Esophagus muscularis mucosa (tissue), 4 donors: ENCODE measurements at regions of chr11 and their contacts with region 1.

Region 1: GRCh38 chr11:123233280-123233974 is 38.4 kb upstream of the CLMP start:
- DNase-seq: no peak
- H3K4me3 ChIP-seq: no peak overlapping the region
- H3K27ac ChIP-seq: peak overlapping the region; percentile 56 to 74 (median 68)
- H3K4me1 ChIP-seq: peaks cover 0 to 56% (median 53%) of the 10 kb centered on the region in 4 donors
- H3K27me3 ChIP-seq: no peaks in the 10 kb centered on the region
- CTCF ChIP-seq: no peak
- EP300 ChIP-seq: no peak
- POLR2A ChIP-seq: no peak

Region 2: GRCh38 chr11:123069908-123070821 is 163.3 kb before region 1 on chr11:
- intact Hi-C with region 1: no loop called
- DNase-seq: no peak
- H3K4me3 ChIP-seq: peak overlapping the region; percentile 5 to 30 (median 15)
- H3K27ac ChIP-seq: peak overlapping the region; percentile 30 to 68 (median 55)
- H3K4me1 ChIP-seq: peaks cover 4 to 59% (median 40%) of the 10 kb centered on the region in 4 donors
- H3K27me3 ChIP-seq: no peaks in the 10 kb centered on the region
- CTCF ChIP-seq: no peak
- EP300 ChIP-seq: no peak
- POLR2A ChIP-seq: no peak

Region 3: DNA sequence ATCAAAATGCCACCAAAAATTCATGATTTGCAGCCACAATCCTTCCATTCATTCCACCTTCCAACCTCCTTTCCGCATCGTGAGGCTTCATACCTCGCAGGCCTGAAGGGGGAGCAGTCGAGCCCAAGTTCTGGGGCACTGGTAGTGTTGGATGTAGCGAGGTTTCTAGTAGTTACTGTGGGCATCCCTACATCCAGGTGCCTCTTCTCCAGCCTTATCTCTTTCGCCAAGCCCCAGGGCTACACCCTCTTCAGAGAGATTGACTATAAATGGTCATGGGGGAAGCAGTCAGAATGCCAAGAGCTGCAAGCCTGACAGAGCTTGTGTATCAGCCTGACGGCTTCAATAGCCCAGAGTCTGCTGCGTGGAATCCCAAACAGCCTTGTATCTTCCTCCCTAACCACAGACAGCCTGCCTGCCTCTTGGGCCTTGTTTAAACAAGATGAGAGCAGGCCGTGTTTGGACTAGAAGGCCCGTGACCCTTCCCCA is 67.3 kb before region 1 on chr11:
- intact Hi-C with region 1: loop called (anchors 2 kb)
- DNase-seq: no peak
- H3K4me3 ChIP-seq: no peak overlapping the region
- H3K27ac ChIP-seq: peak overlapping the region; percentile 73 to 83 (median 78)
- H3K4me1 ChIP-seq: peaks cover 0 to 97% (median 84%) of the 10 kb centered on the region in 4 donors
- H3K27me3 ChIP-seq: no peaks in the 10 kb centered on the region
- CTCF ChIP-seq: peak; percentile 49 to 59 (median 57)
- EP300 ChIP-seq: no peak
- POLR2A ChIP-seq: no peak

Region 4: GRCh38 chr11:123188508-123189165 is 44.8 kb before region 1 on chr11:
- intact Hi-C with region 1: loop called (anchors 5 kb)
- DNase-seq: no peak
- H3K4me3 ChIP-seq: peak overlapping the region; percentile 31 to 51 (median 36)
- H3K27ac ChIP-seq: peak overlapping the region; percentile 88 to 96 (median 92)
- H3K4me1 ChIP-seq: peaks cover 4 to 99% (median 96%) of the 10 kb centered on the region in 4 donors
- H3K27me3 ChIP-seq: peaks cover 0 to 3% (median 1%) of the 10 kb centered on the region in 4 donors
- CTCF ChIP-seq: peak in 1 of 3 experiments; percentile 34
- EP300 ChIP-seq: no peak
- POLR2A ChIP-seq: no peak